ENCODE measurements at regions of chr2 and their contacts with region 1.

Region 1: DNA sequence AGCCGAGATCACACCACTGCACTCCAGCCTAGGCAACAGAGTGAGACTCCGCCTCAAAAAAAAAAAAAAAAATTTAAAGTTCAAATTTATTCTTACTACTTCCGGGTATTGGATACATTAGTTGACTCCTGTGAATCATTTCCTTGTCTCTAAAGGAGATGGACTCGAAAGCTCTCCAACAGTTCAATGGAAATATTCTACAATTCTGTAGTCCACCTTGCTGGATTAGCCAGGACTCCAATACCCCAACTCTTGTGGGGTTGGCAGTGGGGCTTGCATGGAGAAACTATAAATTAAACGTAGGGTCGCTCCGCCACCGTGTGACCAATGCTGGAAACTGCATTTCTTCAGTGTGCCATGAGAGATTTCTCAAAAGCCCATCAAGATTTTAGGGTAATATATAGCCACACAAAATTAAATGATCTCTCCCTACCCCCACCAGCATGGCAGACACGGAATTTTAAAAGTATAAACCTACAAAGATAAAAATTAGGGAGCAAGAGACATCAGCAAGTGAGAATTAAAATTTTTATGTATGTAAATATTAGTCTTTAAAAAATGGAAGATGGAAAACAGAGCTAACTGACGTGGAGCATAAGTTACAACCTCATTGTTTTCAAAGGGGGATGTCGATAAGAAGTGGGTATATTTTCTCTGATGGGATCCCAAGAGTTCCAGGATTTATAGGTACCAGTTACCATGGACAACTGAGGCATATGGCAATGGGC is 27.8 kb upstream of the GAREM2 start:
- DNase-seq: peak; percentile 64
- H3K4me3 Mint-ChIP-seq: no peak overlapping the region
- H3K27ac Mint-ChIP-seq: peak overlapping the region; percentile 2
- H3K4me1 Mint-ChIP-seq: peaks cover 25% of the 10 kb centered on the region
- H3K27me3 Mint-ChIP-seq: peaks cover 22% of the 10 kb centered on the region
- CTCF ChIP-seq: peak; percentile 74

Region 2: DNA sequence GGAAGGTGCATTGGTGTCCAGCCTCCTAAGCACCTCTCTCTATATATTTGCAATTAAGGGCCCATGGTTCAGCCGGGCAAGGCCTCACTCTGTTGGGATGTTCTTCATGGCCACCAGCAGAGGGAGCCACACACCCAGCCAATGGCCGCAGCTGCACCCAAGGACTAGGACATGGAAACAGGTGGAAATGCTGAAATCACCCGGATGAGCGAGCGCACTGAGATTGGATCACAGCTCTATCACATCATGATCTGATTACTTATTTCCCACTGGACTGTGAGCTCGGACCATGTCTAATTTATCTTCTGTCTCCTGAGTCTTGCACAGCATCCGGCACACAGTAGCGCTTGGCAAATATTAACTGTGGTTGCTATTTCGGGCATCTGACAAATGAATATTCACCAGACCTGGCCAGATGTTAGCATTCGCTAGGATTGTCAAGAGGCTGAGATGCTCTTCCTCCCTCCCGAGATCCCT is 194.0 kb before region 1 on chr2:
- CTCF ChIA-PET with region 1: interaction called, 5 read pairs
- intact Hi-C with region 1: loop called (anchors 1 kb)
- DNase-seq: peak; percentile 86
- H3K4me3 Mint-ChIP-seq: peak overlapping the region; percentile 46
- H3K27ac Mint-ChIP-seq: no peak overlapping the region
- H3K4me1 Mint-ChIP-seq: no peaks in the 10 kb centered on the region
- H3K27me3 Mint-ChIP-seq: no peaks in the 10 kb centered on the region
- CTCF ChIP-seq: peak; percentile 96

Region 3: DNA sequence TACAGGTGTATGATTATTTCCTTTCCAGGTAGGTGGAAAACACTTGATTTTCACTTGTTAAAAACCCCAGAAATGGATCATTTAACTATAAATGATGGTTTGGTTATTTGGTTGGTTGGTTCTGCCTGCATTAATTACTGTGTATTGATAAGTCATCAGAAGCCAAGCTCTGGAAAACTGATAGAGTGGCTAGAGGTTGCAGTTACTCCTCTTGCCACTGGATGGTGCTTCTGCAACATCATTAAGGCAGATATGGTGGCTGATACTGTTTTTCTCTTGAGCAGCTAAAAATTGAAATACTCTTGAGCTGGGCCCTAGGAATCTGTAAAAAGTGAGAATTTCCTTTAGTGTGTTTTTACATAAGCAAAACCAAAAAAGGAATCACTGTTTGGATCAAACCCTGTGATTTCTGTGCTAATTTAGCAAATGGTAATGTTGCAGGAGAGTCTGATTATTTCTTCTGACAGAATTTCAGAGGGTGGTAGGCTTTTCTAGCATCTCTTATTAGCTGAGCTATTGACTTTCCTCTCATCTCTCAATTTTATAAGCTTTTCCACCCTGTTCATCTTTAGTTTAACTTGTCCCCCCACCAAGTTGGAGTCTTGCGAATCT is 57.0 kb before region 1 on chr2:
- CTCF ChIA-PET with region 1: interaction called, 4 read pairs
- intact Hi-C with region 1: loop called (anchors 1 kb)
- DNase-seq: peak; percentile 15
- H3K4me3 Mint-ChIP-seq: no peak overlapping the region
- H3K27ac Mint-ChIP-seq: no peak overlapping the region
- H3K4me1 Mint-ChIP-seq: peaks cover 33% of the 10 kb centered on the region
- H3K27me3 Mint-ChIP-seq: no peaks in the 10 kb centered on the region
- CTCF ChIP-seq: peak; percentile 29